ENCODE measurements at regions of chr7 and their contacts with region 1.

Region 1: DNA sequence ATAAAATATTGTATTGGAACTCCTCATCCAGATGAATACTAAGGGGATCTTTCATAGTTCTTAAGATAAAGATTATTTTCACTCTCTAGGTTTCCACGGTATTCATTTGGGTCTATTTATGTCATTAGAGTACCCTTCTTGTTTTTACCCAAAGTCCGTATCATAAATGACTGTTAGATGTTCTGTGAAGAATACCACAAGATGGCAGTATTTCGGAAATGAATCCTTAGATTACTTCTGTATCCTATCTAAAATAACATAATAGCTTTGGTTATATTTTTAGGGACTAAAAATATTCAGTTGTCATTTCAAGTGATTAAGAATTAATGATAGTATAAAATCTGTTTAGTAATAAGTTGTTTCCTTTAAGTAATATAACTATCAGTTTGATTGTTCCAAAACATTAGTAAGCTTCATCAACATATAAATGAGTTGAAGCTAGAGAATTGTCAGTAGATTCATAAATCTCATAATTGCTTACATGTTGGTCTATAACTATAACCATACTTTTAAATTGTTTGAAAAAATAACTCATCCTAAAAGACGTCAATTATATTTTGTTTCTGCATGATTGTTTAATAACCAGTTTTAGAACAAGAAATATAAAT is 337.5 kb upstream of the KCND2 start:
- DNase-seq: no peak
- ATAC-seq: no peak
- H3K4me3 Mint-ChIP-seq: no peak overlapping the region
- H3K27ac Mint-ChIP-seq: no peak overlapping the region
- H3K4me1 Mint-ChIP-seq: no peaks in the 10 kb centered on the region
- H3K27me3 Mint-ChIP-seq: no peaks in the 10 kb centered on the region
- CTCF ChIP-seq: no peak

Region 2: GRCh38 chr7:120554960-120555571 is 619.5 kb after region 1 on chr7:
- CTCF ChIA-PET with region 1: no interaction called
- POLR2A ChIA-PET with region 1: no interaction called
- intact Hi-C with region 1: loop called (anchors 5 kb)
- DNase-seq: no peak
- ATAC-seq: no peak
- H3K4me3 Mint-ChIP-seq: no peak overlapping the region
- H3K27ac Mint-ChIP-seq: no peak overlapping the region
- H3K4me1 Mint-ChIP-seq: no peaks in the 10 kb centered on the region
- H3K27me3 Mint-ChIP-seq: no peaks in the 10 kb centered on the region
- CTCF ChIP-seq: no peak

Region 3: DNA sequence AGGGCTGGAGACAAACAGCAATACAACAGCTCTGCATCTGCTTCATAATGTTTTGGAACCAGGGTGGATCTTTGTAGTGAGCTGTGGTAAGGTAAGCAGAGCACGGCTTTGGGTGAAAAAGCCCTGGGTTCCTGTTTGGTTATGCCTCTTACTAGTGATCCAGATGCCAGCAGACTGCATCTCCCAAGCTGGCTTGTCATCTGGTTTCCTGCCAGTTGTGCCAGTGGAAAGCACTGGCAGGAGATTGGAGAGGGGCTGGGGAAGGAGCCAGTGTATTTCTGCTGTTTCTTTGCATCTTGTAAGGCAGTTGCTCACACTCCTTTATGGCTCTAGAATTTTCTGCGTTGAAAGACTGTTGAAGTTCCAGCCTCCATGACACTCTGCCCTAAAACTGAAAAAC is 784.8 kb after region 1 on chr7:
- CTCF ChIA-PET with region 1: no interaction called
- POLR2A ChIA-PET with region 1: no interaction called
- intact Hi-C with region 1: loop called (anchors 5 kb)
- DNase-seq: no peak
- ATAC-seq: no peak
- H3K4me3 Mint-ChIP-seq: no peak overlapping the region
- H3K27ac Mint-ChIP-seq: no peak overlapping the region
- H3K4me1 Mint-ChIP-seq: no peaks in the 10 kb centered on the region
- H3K27me3 Mint-ChIP-seq: peaks cover 2% of the 10 kb centered on the region
- CTCF ChIP-seq: no peak